HepG2 (cell line): ENCODE measurements at regions of chr6 and their contacts with region 1.

Region 1: GRCh38 chr6:92810913-92811312 is 608.4 kb downstream of the EPHA7 start:
- DNase-seq: peak; percentile 40
- ATAC-seq: peak; percentile 97
- H3K4me3 ChIP-seq: no peak overlapping the region
- H3K27ac ChIP-seq: no peak overlapping the region
- H3K4me1 ChIP-seq: no peaks in the 10 kb centered on the region
- H3K27me3 ChIP-seq: no peaks in the 10 kb centered on the region
- CTCF ChIP-seq: peak; percentile 64
- EP300 ChIP-seq: no peak
- POLR2A ChIP-seq: no peak
- RAD21 ChIP-seq: no peak

Region 2: GRCh38 chr6:92122746-92123145 is 688.2 kb before region 1 on chr6:
- CTCF ChIA-PET with region 1: no interaction called
- POLR2A ChIA-PET with region 1: no interaction called
- in situ Hi-C with region 1: no loop called
- intact Hi-C with region 1: no loop called
- DNase-seq: peak; percentile 11
- ATAC-seq: peak; percentile 63; the same call in 2 of the 3 replicates
- H3K4me3 ChIP-seq: no peak overlapping the region
- H3K27ac ChIP-seq: no peak overlapping the region
- H3K4me1 ChIP-seq: no peaks in the 10 kb centered on the region
- H3K27me3 ChIP-seq: no peaks in the 10 kb centered on the region
- CTCF ChIP-seq: peak; percentile 41
- EP300 ChIP-seq: no peak
- POLR2A ChIP-seq: no peak
- RAD21 ChIP-seq: no peak

Region 3: DNA sequence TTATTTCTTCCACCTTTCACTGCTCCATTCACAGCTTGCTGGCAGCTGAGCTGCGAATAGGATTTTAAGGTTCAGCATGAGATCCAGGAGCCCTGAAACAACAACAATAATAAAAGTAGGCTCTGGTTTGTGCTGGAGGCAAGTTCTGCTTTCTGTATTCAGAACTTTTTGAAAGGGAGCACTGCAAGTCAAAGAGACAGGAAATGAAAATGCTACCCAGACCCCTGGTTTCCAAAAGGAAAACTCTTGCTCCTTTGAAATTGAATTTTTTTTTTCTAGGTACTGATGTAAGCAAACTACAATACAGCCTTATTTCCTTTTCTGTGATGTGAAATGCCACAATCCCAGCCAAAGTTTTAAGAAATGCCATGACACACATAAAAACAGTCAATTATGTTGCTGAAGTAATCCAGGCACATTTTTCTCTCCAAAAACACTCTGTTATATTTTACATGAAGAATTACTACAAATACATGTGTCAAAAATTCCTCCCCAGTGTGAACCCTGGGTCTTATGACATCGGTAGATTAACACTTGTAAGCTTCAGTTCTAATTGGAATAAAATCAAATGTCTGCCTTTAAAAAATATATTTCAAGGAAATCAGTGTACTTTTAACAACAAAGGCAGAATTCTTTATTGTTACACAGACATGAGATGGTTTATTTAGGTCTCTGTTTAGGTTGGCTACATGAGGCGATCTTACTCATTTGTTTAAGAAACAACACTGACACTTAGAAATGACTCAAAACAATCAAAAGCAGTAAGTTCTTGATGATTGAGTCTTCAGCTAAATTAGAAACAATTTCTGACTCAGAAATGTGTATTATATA is 48.3 kb before region 1 on chr6:
- CTCF ChIA-PET with region 1: no interaction called
- POLR2A ChIA-PET with region 1: no interaction called
- in situ Hi-C with region 1: no loop called
- intact Hi-C with region 1: no loop called
- DNase-seq: no peak
- ATAC-seq: no peak
- H3K4me3 ChIP-seq: no peak overlapping the region
- H3K27ac ChIP-seq: no peak overlapping the region
- H3K4me1 ChIP-seq: no peaks in the 10 kb centered on the region
- H3K27me3 ChIP-seq: no peaks in the 10 kb centered on the region
- CTCF ChIP-seq: no peak
- EP300 ChIP-seq: no peak
- POLR2A ChIP-seq: no peak
- RAD21 ChIP-seq: no peak

Region 4: GRCh38 chr6:92865002-92865555 is 54.2 kb after region 1 on chr6:
- CTCF ChIA-PET with region 1: no interaction called
- POLR2A ChIA-PET with region 1: no interaction called
- in situ Hi-C with region 1: no loop called
- intact Hi-C with region 1: loop called (anchors 1 kb)
- DNase-seq: no peak
- ATAC-seq: no peak
- H3K4me3 ChIP-seq: no peak overlapping the region
- H3K27ac ChIP-seq: no peak overlapping the region
- H3K4me1 ChIP-seq: no peaks in the 10 kb centered on the region
- H3K27me3 ChIP-seq: no peaks in the 10 kb centered on the region
- CTCF ChIP-seq: no peak
- EP300 ChIP-seq: no peak
- POLR2A ChIP-seq: no peak
- RAD21 ChIP-seq: no peak

Region 5: GRCh38 chr6:93017213-93017612 is 206.3 kb after region 1 on chr6:
- CTCF ChIA-PET with region 1: no interaction called
- POLR2A ChIA-PET with region 1: no interaction called
- in situ Hi-C with region 1: no loop called
- intact Hi-C with region 1: loop called (anchors 2 kb)
- DNase-seq: peak; percentile 2
- ATAC-seq: no peak
- H3K4me3 ChIP-seq: no peak overlapping the region
- H3K27ac ChIP-seq: no peak overlapping the region
- H3K4me1 ChIP-seq: no peaks in the 10 kb centered on the region
- H3K27me3 ChIP-seq: no peaks in the 10 kb centered on the region; a peak in 1 of 5 replicates
- CTCF ChIP-seq: no peak
- EP300 ChIP-seq: no peak
- POLR2A ChIP-seq: no peak
- RAD21 ChIP-seq: no peak